Calu3 (cell line): ENCODE measurements at regions of chr7 and their contacts with region 1.

Region 1: DNA sequence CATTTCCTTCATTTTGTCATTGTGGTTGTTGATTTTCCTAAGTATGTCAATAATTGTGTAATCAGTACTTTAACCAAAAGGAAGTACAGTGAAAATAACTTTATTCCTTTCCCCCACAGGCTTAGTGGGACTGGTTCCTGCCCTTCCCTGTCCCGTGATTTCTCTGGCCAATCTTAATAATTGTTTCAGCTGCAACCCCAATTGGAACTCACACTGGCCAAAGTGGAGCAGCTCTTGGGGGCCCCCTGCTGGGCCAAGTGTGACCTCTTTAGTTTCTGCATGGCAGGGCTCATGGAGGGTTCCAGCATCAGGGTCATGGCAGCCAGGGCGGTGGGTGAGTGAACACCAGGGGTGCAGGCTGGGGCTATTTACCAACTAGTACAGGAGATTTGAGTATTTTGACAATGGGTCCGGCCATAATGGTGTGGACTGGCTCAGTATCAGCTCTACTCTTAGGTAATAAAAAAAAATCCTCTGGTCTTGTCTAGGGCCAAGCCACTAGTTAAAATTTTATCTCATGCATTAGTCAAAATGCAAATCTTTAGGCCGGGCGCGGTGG is 31.7 kb downstream of the CYCS start:
- DNase-seq: peak; percentile 99
- H3K4me3 Mint-ChIP-seq: peak overlapping the region; percentile 64
- H3K27ac Mint-ChIP-seq: peak overlapping the region; percentile 91
- H3K4me1 Mint-ChIP-seq: peaks cover 67% of the 10 kb centered on the region
- H3K27me3 Mint-ChIP-seq: no peaks in the 10 kb centered on the region
- CTCF ChIP-seq: peak; percentile 99

Region 2: DNA sequence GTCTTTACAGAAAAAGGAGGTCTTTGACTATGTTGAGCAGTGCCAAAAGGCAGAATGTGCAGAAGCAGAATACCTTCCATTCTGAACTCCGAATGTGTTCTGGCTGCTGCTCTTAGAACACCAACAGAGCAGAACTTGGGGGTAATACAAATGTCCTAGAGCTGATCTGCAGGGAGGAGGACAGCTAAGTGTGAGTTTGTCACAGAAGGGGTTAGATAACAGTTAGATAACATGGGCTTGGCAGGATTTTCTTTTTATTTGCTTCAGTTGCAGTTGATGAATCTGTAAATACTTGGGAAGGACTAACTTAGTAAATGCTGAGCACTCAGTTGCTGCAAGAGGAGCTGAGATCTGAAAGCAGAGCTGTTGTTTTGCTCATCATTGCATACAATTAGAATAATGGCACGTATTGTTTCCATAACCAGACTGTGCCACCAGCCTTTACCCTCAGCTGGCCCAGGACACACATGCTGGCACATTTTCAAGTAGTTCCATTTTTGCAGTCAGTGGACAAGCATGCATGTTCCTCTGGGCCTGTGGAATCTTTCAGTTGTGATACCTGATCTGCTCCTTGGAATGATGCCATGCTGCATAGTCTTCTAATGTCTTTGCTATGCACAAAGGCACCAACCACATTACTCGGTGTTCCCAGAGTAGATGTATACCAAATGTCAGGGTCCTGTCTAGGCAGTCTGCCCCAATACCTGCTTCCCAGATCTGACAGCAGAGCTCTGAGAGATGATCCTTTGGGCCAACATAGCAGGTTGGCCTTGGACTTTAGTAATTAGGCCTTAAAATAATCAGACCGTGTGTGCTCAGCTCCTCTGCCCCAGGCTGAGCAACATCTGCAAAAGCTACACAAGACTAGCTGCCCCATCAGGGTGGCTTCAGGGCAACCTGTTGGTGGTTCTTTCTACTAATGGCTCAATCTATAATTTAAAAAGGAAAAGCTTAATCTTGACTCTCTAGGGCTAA is 391.8 kb before region 1 on chr7:
- CTCF ChIA-PET with region 1: no interaction called
- intact Hi-C with region 1: loop called (anchors 10 kb)
- DNase-seq: peak; percentile 47
- H3K4me3 Mint-ChIP-seq: no peak overlapping the region
- H3K27ac Mint-ChIP-seq: no peak overlapping the region
- H3K4me1 Mint-ChIP-seq: peaks cover 14% of the 10 kb centered on the region
- H3K27me3 Mint-ChIP-seq: no peaks in the 10 kb centered on the region
- CTCF ChIP-seq: no peak

Region 3: DNA sequence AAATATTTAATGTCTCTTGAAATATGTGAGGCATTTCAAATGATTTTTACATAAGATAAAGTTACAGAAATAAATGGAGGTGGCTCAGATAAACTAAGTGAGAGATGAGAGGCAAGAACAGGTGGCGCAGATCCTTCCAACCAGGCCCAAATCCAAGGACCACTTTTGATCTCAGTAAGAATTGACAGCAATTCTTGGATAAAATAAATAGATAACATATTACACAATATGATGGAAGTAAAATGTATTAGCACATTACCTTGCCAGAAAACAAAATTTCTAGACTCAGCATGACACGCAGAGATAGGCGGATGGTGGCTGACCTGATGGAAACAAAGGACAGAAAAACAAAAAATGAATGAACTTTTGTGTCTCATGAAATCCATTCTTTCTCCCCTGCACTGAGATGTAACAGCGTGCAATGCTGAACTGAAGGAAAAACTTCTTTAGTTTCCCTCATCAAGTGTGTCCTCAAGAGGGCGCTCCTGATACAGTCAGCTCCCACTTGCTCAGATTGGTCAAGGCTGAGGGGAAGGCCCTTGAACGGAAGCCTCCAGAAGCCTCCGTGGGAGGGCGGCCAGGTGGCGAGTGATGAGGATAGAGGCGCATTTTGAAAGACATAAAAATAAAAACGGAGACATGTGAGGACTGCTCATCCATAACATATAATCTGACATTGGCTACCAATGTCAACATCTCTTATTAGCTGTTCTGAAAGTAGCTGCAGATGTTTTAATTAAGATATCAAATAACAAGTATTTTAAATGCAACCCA is 273.2 kb before region 1 on chr7:
- CTCF ChIA-PET with region 1: interaction called, 57 read pairs
- intact Hi-C with region 1: loop called (anchors 1 kb)
- DNase-seq: peak; percentile 92
- H3K4me3 Mint-ChIP-seq: peak overlapping the region; percentile 31
- H3K27ac Mint-ChIP-seq: peak overlapping the region; percentile 88
- H3K4me1 Mint-ChIP-seq: peaks cover 55% of the 10 kb centered on the region
- H3K27me3 Mint-ChIP-seq: no peaks in the 10 kb centered on the region
- CTCF ChIP-seq: peak; percentile 96

Region 4: DNA sequence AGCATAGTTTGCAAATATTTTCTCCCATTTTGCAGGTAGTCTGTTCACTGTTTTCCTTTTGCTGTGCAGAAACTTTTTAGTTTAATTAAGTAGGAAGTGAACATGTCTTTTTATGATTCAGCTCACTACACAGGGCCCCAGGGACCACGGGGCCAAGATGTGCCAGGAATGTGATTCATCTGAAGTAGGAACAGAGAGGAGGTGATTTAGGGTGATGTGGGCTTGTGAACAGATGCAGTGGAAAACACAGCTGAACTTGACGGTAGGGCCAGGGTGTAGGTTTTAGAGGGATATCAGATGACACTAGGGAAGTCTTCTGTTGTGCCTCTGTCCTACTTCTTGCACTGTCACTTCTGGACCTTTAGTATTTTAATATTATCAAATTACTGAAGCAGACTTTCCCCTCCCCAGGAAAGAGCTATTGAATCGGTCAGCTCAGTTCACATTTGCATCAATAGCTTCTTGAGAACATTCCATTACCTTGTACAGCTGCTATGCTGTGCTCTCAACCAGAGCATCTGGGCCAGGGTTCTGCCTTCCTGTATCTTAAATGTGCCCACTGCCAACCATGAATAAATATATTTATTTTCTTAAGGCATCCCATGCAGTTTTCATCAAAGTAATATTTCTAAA is 210.2 kb before region 1 on chr7:
- CTCF ChIA-PET with region 1: interaction called, 6 read pairs
- intact Hi-C with region 1: loop called (anchors 10 kb)
- DNase-seq: no peak
- H3K4me3 Mint-ChIP-seq: no peak overlapping the region
- H3K27ac Mint-ChIP-seq: peak overlapping the region; percentile 3
- H3K4me1 Mint-ChIP-seq: no peaks in the 10 kb centered on the region
- H3K27me3 Mint-ChIP-seq: no peaks in the 10 kb centered on the region
- CTCF ChIP-seq: no peak

Region 5: DNA sequence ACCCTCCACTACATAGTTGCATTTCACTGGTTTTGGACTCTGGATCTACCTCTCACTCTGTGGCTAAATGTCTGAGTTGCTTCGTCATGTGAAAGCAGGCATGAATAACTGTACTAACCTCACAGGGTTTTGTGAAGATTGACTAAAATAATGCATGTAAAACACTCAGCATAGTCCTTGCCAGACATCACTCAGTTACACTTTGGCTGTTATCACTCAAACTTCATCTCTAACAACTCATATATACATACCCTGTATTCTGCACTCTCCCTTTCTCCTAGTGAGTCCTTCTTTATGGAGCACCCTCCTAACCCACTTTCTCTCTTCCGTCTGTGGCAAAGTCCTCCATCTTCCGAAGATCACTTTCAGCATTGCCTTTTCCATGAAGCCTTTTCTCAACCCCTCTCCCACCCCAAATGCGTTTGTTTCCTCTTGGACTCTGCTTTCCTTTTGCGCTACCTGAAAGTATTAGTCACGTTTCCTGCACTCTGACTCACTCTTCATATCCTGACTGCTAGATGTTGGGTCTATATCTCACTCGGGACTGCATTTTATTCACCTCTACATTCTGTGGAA is 185.9 kb before region 1 on chr7:
- CTCF ChIA-PET with region 1: interaction called, 5 read pairs
- intact Hi-C with region 1: loop called (anchors 2 kb)
- DNase-seq: peak; percentile 69
- H3K4me3 Mint-ChIP-seq: no peak overlapping the region
- H3K27ac Mint-ChIP-seq: no peak overlapping the region
- H3K4me1 Mint-ChIP-seq: peaks cover 23% of the 10 kb centered on the region
- H3K27me3 Mint-ChIP-seq: no peaks in the 10 kb centered on the region
- CTCF ChIP-seq: no peak

Region 6: DNA sequence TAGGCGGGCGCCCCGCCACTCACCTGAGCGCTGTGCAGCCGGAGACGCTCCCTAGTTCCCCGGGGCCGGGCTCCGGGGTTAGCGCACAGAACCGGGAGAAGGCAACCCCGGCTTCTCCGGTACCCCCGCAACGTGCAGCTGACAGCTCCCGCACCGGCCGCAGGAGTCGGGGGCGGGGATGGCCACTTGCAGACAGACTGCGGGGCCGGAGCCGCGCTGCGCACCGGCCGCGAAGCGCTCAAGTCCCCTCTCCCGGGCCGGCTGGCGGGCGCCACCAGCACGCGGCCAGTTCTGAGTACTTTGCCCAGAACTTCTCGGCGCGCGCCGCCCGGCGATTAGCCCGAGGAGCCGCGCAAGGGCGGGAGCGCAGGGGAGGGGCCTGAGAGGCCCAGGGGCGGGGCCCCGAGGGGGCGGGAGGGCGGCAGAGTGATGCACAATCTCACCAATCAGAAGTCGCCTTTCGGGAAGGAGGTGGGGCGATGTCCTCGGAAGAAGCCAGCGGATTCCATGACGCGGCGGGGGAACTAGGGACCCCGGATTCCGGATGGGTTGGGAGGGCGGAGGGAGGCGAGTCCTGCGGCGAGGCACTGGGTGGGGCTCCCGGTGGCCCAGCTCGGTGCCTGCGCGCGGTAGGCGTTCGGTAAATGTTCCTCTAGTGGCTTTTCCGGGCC is 113.3 kb before region 1 on chr7 and contains the start of gene OSBPL3:
- CTCF ChIA-PET with region 1: interaction called, 27 read pairs
- intact Hi-C with region 1: loop called (anchors 1 kb)
- DNase-seq: peak; percentile 99
- H3K4me3 Mint-ChIP-seq: peak within 1 kb of the TSS; percentile 86
- H3K27ac Mint-ChIP-seq: peak within 1 kb of the TSS; percentile 92
- H3K4me1 Mint-ChIP-seq: peaks cover 48% of the 10 kb centered on the region
- H3K27me3 Mint-ChIP-seq: no peaks in the 10 kb centered on the region
- CTCF ChIP-seq: no peak
- total RNA-seq, gene OSBPL3: 124 and 136 TPM in 2 replicates

Region 7: GRCh38 chr7:25069900-25070443 is 23.4 kb before region 1 on chr7:
- CTCF ChIA-PET with region 1: interaction called, 12 read pairs
- intact Hi-C with region 1: loop called (anchors 2 kb)
- DNase-seq: peak; percentile 77
- H3K4me3 Mint-ChIP-seq: peak overlapping the region; percentile 21
- H3K27ac Mint-ChIP-seq: peak overlapping the region; percentile 35
- H3K4me1 Mint-ChIP-seq: peaks cover 39% of the 10 kb centered on the region
- H3K27me3 Mint-ChIP-seq: no peaks in the 10 kb centered on the region
- CTCF ChIP-seq: peak; percentile 74